ENCODE measurements at regions of chr18 and their contacts with region 1.

Region 1: DNA sequence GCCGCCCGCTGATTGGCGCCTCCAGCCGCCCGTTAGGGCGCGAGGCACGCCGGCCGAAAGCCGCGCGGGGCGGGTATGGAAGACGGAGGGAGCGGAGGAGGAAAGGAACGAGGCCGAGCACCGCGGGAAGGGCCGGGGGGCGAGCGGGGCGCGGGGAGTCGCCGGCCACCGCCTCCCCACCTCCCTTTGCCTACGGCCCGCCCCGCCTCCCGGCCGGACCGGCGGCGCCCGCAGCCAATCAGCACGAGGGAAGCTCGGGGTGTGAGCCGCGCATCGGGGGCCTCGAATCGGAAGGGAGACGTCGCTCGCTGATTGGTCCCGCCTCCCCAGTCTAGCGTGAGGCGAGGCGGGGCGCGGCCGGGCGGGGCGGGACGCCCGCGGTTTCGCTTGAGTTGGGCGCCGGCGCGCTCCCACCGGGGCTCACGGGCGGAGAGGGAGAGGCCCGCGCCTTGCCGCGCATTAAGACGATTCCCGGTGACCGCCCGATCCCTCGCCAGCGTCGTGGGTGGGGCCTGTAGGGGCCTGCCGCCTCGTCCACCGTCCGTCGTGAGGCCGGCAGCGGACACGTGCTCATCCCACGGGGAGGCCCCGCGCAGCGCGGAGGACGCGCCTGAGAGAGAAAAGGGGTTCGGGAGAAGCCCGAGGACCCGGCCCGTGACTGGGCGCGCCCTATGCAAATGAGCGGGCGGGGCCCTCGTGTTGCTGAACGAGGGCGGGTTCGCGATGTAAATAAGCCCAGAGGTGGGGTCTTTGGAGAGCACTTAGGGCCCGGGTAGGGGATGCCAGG is 665 bp upstream of the SMAD2 start:
- DNase-seq: peak; percentile 86 to 98 (median 92)
- ATAC-seq: peak; percentile 75
- H3K4me3 ChIP-seq: peak overlapping the region; percentile 56
- H3K4me3 Mint-ChIP-seq: peak overlapping the region; percentile 93
- H3K27ac ChIP-seq: peak overlapping the region; percentile 78 to 92
- H3K27ac Mint-ChIP-seq: peak overlapping the region; percentile 95
- H3K4me1 ChIP-seq: peaks cover 20% of the 10 kb centered on the region
- H3K4me1 Mint-ChIP-seq: peaks cover 45% of the 10 kb centered on the region
- H3K27me3 ChIP-seq: no peaks in the 10 kb centered on the region
- H3K27me3 Mint-ChIP-seq: no peaks in the 10 kb centered on the region
- CTCF ChIP-seq: no peak

Region 2: DNA sequence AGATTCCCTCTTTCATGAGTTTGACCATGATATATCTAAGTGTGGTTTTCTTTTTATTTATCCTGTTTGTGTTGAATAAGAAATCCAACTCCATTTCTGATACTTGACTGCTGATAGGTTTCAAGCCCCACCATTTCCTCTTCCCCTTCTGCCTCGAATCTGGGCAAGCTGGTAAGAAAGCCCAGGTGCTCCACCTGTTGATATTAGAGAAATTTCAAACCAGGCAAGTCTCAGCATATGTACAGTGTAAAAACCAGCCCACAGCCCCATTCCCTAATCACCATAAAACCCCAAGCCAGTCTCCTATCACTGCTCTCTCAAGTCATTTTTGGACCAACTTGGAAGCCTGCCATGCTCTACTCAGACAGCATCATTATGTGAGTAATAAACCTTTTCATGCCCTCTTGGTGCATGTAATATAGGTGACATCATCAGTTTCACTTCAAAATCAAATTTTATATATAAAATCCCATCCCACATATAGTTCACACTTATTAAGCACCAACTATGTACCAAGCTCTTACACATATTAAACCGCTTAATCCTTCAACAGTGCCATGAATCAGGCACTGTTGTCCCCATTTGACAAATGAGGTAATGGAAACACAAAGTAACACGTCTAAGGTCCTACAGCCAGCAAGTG is 47.2 kb before region 1 on chr18:
- CTCF ChIA-PET with region 1: no interaction called
- POLR2A ChIA-PET with region 1: interaction called, 9 read pairs
- intact Hi-C with region 1: loop called in 1 of 2 experiments (anchors 5 kb)
- DNase-seq: peak in 1 of 14 experiments; percentile 22
- ATAC-seq: no peak
- H3K4me3 ChIP-seq: no peak overlapping the region
- H3K4me3 Mint-ChIP-seq: no peak overlapping the region
- H3K27ac ChIP-seq: no peak overlapping the region
- H3K27ac Mint-ChIP-seq: peak overlapping the region; percentile 50
- H3K4me1 ChIP-seq: no peaks in the 10 kb centered on the region
- H3K4me1 Mint-ChIP-seq: peaks cover 64% of the 10 kb centered on the region
- H3K27me3 ChIP-seq: no peaks in the 10 kb centered on the region
- H3K27me3 Mint-ChIP-seq: no peaks in the 10 kb centered on the region
- CTCF ChIP-seq: no peak

Region 3: DNA sequence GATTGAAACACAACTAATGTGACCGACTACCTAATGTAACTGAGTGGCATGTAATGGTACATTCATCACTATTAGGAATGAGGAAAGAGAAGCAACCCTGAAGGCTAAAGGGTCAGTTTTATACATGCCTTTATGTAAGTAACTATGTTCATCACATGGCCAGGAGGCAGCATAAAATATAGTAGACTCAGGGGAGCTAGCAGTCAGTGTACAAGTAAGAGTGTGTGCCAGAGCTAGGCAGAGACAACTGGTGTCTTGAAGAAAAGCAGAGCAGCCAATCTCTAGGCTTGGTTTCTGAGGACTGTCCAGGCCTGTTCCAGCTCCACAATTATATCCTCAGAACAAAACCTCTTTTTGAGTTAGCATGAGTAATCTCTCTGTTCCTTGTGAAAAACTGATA is 18.8 kb before region 1 on chr18:
- CTCF ChIA-PET with region 1: interaction called, 6 read pairs
- POLR2A ChIA-PET with region 1: interaction called, 24 read pairs
- intact Hi-C with region 1: no loop called
- DNase-seq: no peak
- ATAC-seq: peak; percentile 39
- H3K4me3 ChIP-seq: no peak overlapping the region
- H3K4me3 Mint-ChIP-seq: peak overlapping the region; percentile 6
- H3K27ac ChIP-seq: peak overlapping the region in 1 of 2 donors; percentile 53
- H3K27ac Mint-ChIP-seq: peak overlapping the region; percentile 66
- H3K4me1 ChIP-seq: peaks cover 31% of the 10 kb centered on the region
- H3K4me1 Mint-ChIP-seq: peaks cover 91% of the 10 kb centered on the region
- H3K27me3 ChIP-seq: no peaks in the 10 kb centered on the region
- H3K27me3 Mint-ChIP-seq: no peaks in the 10 kb centered on the region
- CTCF ChIP-seq: no peak

Region 4: DNA sequence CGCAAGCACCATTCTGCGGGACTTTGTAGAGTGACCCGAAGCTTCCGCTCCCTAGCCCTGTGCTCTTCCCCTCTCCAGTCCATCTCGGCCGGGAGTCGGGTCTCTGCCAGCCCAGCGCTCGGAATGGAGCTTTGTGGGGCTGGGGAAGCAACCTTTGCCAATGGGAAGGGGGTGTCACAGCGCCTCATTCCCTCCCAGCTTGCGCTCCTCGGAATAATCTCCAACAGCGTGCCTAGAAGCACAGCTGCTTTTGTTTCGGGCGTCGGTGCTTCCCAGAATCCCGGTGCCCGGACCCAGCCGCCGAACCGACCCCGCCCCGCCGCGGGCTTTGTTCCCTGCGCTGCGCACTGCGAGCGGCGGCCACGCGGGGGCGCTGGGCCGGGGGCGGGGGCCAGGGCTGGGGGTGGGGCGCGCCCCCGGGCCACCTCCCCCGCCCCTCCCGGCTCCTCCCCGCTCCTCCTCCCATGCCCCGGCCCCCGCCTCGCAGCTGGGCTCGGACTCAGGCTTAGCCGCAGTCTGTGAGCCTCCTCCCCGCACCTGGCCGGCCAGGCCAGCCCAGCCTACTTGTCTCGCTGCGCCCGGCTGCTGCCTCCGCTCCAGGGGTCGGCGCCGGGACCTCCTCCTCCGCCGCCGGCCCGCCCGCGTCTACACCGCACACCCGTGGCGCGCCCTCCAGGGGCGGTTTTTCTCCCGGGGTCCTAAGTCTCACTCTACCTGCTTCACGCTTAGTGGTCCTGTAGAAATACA is 77.0 kb after region 1 on chr18:
- CTCF ChIA-PET with region 1: interaction called, 4 read pairs
- POLR2A ChIA-PET with region 1: no interaction called
- intact Hi-C with region 1: loop called in 1 of 2 experiments (anchors 5 kb)
- DNase-seq: peak; percentile 12 to 76 (median 32)
- ATAC-seq: peak; percentile 89
- H3K4me3 ChIP-seq: peak overlapping the region; percentile 46
- H3K4me3 Mint-ChIP-seq: peak overlapping the region; percentile 77
- H3K27ac ChIP-seq: no peak overlapping the region
- H3K27ac Mint-ChIP-seq: no peak overlapping the region
- H3K4me1 ChIP-seq: peaks cover 12% of the 10 kb centered on the region
- H3K4me1 Mint-ChIP-seq: peaks cover 6% of the 10 kb centered on the region
- H3K27me3 ChIP-seq: peaks cover 10% of the 10 kb centered on the region in 2 experiments
- H3K27me3 Mint-ChIP-seq: peaks cover 19% of the 10 kb centered on the region
- CTCF ChIP-seq: peak; percentile 23